ENCODE measurements at regions of chr1 and their contacts with region 1.

Region 1: DNA sequence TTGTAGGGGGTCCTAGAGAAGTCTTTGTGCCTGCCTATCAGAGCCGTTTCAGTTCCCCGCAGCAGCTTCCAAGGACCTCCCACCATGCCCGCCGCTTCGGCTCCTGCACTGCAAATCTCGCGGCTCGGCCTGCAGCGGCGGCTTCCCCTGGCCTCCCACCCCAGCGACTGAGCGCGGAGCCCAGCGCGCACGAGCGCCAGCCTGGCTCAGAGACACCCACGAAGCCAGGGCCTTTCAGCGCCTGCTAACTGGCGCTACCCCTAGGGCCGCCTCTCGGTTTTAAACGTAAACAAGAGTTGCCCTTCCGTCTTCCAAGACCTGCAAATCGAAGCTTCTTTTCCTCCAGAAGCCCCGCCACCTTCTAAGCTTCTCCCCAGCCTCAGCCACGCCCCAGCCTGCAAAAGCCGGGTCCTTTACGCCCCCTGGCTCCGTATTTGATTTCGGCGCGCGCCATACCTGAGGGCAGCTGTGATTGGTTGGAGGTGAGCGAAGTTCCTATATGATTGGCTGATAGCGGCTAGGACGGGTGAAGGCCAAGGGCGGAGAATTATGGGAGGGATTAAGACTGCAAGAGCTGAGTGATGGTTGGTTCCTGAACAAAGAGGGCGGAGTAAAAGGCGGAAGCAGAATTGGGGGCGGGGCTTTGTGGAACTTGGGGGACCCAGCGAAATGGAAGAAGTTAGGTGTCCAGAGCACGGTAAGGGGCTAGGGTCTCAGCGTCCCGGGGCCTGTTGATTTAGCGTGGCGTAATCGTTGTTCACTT is at the start of gene TTF2:
- DNase-seq: peak; percentile 97 to 99 (median 98)
- H3K4me3 ChIP-seq: peak within 1 kb of the TSS; percentile 77 to 85
- H3K4me3 Mint-ChIP-seq: no peak within 1 kb of the TSS
- H3K27ac ChIP-seq: peak within 1 kb of the TSS; percentile 75
- H3K27ac Mint-ChIP-seq: peak within 1 kb of the TSS in 2 of 7 donors; percentile 81 to 84
- H3K4me1 ChIP-seq: peaks cover 40% of the 10 kb centered on the region
- H3K4me1 Mint-ChIP-seq: peaks cover 23 to 46% (median 29%) of the 10 kb centered on the region in 4 donors
- H3K27me3 ChIP-seq: no peaks in the 10 kb centered on the region
- H3K27me3 Mint-ChIP-seq: no peaks in the 10 kb centered on the region
- total RNA-seq, gene TTF2: 26.4 to 29.5 TPM

Region 2: GRCh38 chr1:116570358-116571200 is 489.3 kb before region 1 on chr1 and contains the start of gene CD58:
- CTCF ChIA-PET with region 1: interaction called, 12 read pairs
- POLR2A ChIA-PET with region 1: interaction called, 4 read pairs
- intact Hi-C with region 1: loop called (anchors 1 kb)
- DNase-seq: peak; percentile 74 to 81 (median 75)
- H3K4me3 ChIP-seq: peak within 1 kb of the TSS; percentile 80 to 93
- H3K4me3 Mint-ChIP-seq: peak within 1 kb of the TSS; percentile 89 to 99 (median 94)
- H3K27ac ChIP-seq: peak within 1 kb of the TSS; percentile 93
- H3K27ac Mint-ChIP-seq: peak within 1 kb of the TSS; percentile 90 to 98 (median 97)
- H3K4me1 ChIP-seq: peaks cover 62% of the 10 kb centered on the region
- H3K4me1 Mint-ChIP-seq: peaks cover 35 to 64% (median 49%) of the 10 kb centered on the region in 4 donors
- H3K27me3 ChIP-seq: no peaks in the 10 kb centered on the region
- H3K27me3 Mint-ChIP-seq: peaks cover 0 to 2% of the 10 kb centered on the region in 2 donors
- total RNA-seq, gene CD58: 25.2 to 30.9 TPM

Region 3: GRCh38 chr1:116754198-116754977 is 305.5 kb before region 1 on chr1 and contains the start of gene CD2:
- CTCF ChIA-PET with region 1: interaction called, 3 read pairs
- POLR2A ChIA-PET with region 1: interaction called, 10 read pairs
- intact Hi-C with region 1: no loop called
- DNase-seq: peak; percentile 66 to 74 (median 71)
- H3K4me3 ChIP-seq: peak within 1 kb of the TSS; percentile 53 to 72
- H3K4me3 Mint-ChIP-seq: peak within 1 kb of the TSS; percentile 96 to 100 (median 98)
- H3K27ac ChIP-seq: peak within 1 kb of the TSS; percentile 88
- H3K27ac Mint-ChIP-seq: peak within 1 kb of the TSS; percentile 96 to 100 (median 99)
- H3K4me1 ChIP-seq: peaks cover 34% of the 10 kb centered on the region
- H3K4me1 Mint-ChIP-seq: peaks cover 25 to 64% (median 33%) of the 10 kb centered on the region in 4 donors
- H3K27me3 ChIP-seq: no peaks in the 10 kb centered on the region
- H3K27me3 Mint-ChIP-seq: no peaks in the 10 kb centered on the region
- total RNA-seq, gene CD2: 305 to 316 TPM

Region 4: DNA sequence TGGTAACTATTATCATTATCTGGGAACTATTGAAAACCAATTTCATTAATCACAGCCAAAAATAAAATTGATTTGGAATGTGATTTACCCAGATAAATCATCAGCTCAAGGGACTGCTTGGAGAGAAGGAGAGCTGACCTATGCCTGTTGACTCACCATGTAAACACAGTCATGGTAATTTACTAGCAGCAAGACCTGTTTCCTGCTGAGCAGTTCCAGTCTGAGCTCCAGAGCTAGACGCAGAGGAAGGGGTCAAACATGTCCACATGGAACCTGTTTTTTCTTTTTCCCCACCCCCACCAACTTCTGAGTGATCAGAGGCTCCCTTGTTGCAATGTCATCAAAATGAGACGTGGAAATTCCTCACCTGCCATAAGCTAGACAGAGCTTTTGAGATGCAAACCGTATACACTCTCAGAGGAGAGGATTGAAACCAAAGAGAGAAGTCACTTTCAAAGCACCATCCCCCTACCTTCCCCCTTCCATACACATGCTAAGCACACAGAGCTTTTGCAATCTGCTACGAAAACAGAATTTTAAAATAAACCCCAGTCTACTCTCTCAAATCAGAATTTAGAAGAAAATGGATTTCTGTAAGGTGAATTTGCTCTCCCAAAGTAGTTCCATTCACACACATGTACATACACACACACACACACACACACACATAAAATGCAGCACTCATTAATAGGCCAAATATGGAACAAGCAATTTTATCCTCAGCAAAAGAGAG is 206.0 kb before region 1 on chr1:
- CTCF ChIA-PET with region 1: interaction called, 87 read pairs
- POLR2A ChIA-PET with region 1: interaction called, 5 read pairs
- intact Hi-C with region 1: loop called (anchors 1 kb)
- DNase-seq: no peak
- H3K4me3 ChIP-seq: no peak overlapping the region
- H3K4me3 Mint-ChIP-seq: no peak overlapping the region
- H3K27ac ChIP-seq: no peak overlapping the region
- H3K27ac Mint-ChIP-seq: peak overlapping the region in 5 of 7 donors; percentile 8 to 85 (median 43)
- H3K4me1 ChIP-seq: peaks cover 4% of the 10 kb centered on the region
- H3K4me1 Mint-ChIP-seq: peaks cover 8 to 19% (median 15%) of the 10 kb centered on the region in 4 donors
- H3K27me3 ChIP-seq: no peaks in the 10 kb centered on the region
- H3K27me3 Mint-ChIP-seq: no peaks in the 10 kb centered on the region

Region 5: GRCh38 chr1:116987256-116987555 is 72.7 kb before region 1 on chr1:
- CTCF ChIA-PET with region 1: interaction called, 12 read pairs
- POLR2A ChIA-PET with region 1: interaction called, 25 read pairs
- intact Hi-C with region 1: loop called (anchors 2 kb)
- DNase-seq: peak; percentile 64 to 78 (median 74)
- H3K4me3 ChIP-seq: peak overlapping the region; percentile 44 to 59
- H3K4me3 Mint-ChIP-seq: peak overlapping the region; percentile 83 to 94 (median 88)
- H3K27ac ChIP-seq: peak overlapping the region; percentile 51
- H3K27ac Mint-ChIP-seq: peak overlapping the region; percentile 74 to 98 (median 95)
- H3K4me1 ChIP-seq: peaks cover 34% of the 10 kb centered on the region
- H3K4me1 Mint-ChIP-seq: peaks cover 25 to 42% (median 31%) of the 10 kb centered on the region in 4 donors
- H3K27me3 ChIP-seq: no peaks in the 10 kb centered on the region
- H3K27me3 Mint-ChIP-seq: no peaks in the 10 kb centered on the region

Region 6: GRCh38 chr1:117128323-117129079 is 68.6 kb after region 1 on chr1:
- CTCF ChIA-PET with region 1: interaction called, 111 read pairs
- POLR2A ChIA-PET with region 1: interaction called, 6 read pairs
- intact Hi-C with region 1: loop called (anchors 2 kb)
- DNase-seq: peak in 4 of 5 donors; percentile 28 to 38 (median 33)
- H3K4me3 ChIP-seq: no peak overlapping the region
- H3K4me3 Mint-ChIP-seq: no peak overlapping the region
- H3K27ac ChIP-seq: no peak overlapping the region
- H3K27ac Mint-ChIP-seq: peak overlapping the region in 1 of 7 donors; percentile 8
- H3K4me1 ChIP-seq: no peaks in the 10 kb centered on the region
- H3K4me1 Mint-ChIP-seq: peaks cover 0 to 5% (median 2%) of the 10 kb centered on the region in 4 donors
- H3K27me3 ChIP-seq: no peaks in the 10 kb centered on the region
- H3K27me3 Mint-ChIP-seq: peaks cover 7 to 16% of the 10 kb centered on the region in 2 donors

Region 7: DNA sequence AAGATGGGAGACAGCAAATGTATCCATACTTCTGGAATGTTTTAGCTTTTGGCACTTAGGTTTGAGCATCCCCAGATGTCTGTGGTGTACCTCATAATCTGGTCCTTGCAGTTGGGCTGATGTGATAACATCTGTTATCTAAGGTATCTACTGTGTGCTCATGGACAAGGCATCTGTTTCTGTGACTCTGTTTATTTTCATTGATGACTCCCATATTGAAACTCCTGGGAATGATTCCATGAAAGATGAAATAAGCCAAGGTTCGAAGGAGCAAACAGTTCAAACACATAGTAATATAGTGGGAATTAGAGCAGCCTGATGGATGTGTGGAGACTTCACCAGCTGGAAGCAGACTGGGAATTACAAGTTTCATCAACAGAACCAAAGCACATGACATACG is 82.3 kb after region 1 on chr1:
- CTCF ChIA-PET with region 1: no interaction called
- POLR2A ChIA-PET with region 1: no interaction called
- intact Hi-C with region 1: no loop called
- DNase-seq: no peak
- H3K4me3 ChIP-seq: no peak overlapping the region
- H3K4me3 Mint-ChIP-seq: no peak overlapping the region
- H3K27ac ChIP-seq: no peak overlapping the region
- H3K27ac Mint-ChIP-seq: no peak overlapping the region
- H3K4me1 ChIP-seq: no peaks in the 10 kb centered on the region
- H3K4me1 Mint-ChIP-seq: no peaks in the 10 kb centered on the region
- H3K27me3 ChIP-seq: peaks cover 5% of the 10 kb centered on the region
- H3K27me3 Mint-ChIP-seq: peaks cover 8 to 10% of the 10 kb centered on the region in 2 donors

Region 8: DNA sequence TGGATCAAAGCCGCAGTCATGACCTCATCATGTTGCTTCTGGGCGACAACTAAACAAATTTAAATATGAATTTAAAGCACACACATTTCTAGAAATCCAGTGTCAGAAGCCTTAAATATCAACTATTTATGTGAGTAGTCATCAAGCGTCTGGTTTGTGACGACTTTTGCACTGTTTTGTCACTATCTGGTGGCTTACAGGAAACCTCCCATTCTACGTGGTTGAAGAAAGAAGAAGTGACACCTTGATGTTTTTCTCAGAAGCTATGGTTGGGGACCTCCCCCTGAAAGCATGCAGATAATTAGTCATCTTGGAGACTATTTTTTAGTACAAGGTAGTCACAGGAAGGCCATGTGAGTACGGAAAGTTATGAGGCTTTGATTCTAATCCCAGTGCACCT is 604.5 kb after region 1 on chr1:
- CTCF ChIA-PET with region 1: no interaction called
- POLR2A ChIA-PET with region 1: no interaction called
- intact Hi-C with region 1: loop called (anchors 5 kb)
- DNase-seq: peak; percentile 84 to 92 (median 89)
- H3K4me3 ChIP-seq: no peak overlapping the region
- H3K4me3 Mint-ChIP-seq: peak overlapping the region in 6 of 8 donors; percentile 29 to 82 (median 64)
- H3K27ac ChIP-seq: peak overlapping the region; percentile 71
- H3K27ac Mint-ChIP-seq: peak overlapping the region; percentile 86 to 99 (median 98)
- H3K4me1 ChIP-seq: peaks cover 77% of the 10 kb centered on the region
- H3K4me1 Mint-ChIP-seq: peaks cover 60 to 89% (median 73%) of the 10 kb centered on the region in 4 donors
- H3K27me3 ChIP-seq: no peaks in the 10 kb centered on the region
- H3K27me3 Mint-ChIP-seq: no peaks in the 10 kb centered on the region

Measured in CD4-positive, alpha-beta memory T cell (primary cell).